ENCODE measurements at regions of chr17 and their contacts with region 1.

Region 1: GRCh38 chr17:21295036-21295952 is 10.8 kb downstream of the MAP2K3 start:
- DNase-seq: no peak
- H3K4me3 ChIP-seq: no peak overlapping the region
- H3K27ac ChIP-seq: no peak overlapping the region
- H3K4me1 ChIP-seq: no peaks in the 10 kb centered on the region
- H3K27me3 ChIP-seq: no peaks in the 10 kb centered on the region
- CTCF ChIP-seq: no peak
- EP300 ChIP-seq: no peak
- POLR2A ChIP-seq: no peak

Region 2: GRCh38 chr17:22717211-22717610 is 1421.9 kb after region 1 on chr17:
- intact Hi-C with region 1: loop called in 1 of 4 experiments (anchors 10 kb)
- DNase-seq: no peak
- H3K4me3 ChIP-seq: no peak overlapping the region
- H3K27ac ChIP-seq: no peak overlapping the region
- H3K4me1 ChIP-seq: no peaks in the 10 kb centered on the region
- H3K27me3 ChIP-seq: no peaks in the 10 kb centered on the region
- CTCF ChIP-seq: no peak
- EP300 ChIP-seq: no peak
- POLR2A ChIP-seq: no peak

Measured in ovary (tissue), 10 donors.